GM10248 (cell line): ENCODE measurements at regions of chr3 and their contacts with region 1.

Region 1: DNA sequence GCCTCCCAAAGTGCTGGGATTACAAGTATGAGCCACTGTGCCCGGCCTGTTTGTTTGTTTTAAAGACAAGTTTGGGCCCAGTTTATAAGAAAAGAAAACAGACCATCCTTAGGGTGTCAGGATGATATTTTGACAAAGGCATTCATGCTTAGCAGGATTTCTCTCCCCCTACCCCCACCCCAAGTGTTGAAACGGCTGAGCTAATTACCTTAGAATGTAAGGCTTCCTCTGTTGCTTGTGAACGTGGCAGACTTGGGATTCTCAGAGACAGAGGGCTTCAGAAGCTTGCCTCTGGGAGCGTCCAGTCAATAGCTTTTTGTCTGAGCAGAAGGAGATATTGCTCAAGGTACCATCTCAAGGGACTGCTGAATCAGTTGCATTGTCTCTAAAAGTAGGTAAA is 24.0 kb downstream of the FLNB start:
- DNase-seq: no peak
- CTCF ChIP-seq: no peak

Region 2: GRCh38 chr3:57998366-57999283 is 33.6 kb before region 1 on chr3:
- CTCF ChIA-PET with region 1: no interaction called
- POLR2A ChIA-PET with region 1: no interaction called
- DNase-seq: peak; percentile 60
- CTCF ChIP-seq: no peak

Region 3: DNA sequence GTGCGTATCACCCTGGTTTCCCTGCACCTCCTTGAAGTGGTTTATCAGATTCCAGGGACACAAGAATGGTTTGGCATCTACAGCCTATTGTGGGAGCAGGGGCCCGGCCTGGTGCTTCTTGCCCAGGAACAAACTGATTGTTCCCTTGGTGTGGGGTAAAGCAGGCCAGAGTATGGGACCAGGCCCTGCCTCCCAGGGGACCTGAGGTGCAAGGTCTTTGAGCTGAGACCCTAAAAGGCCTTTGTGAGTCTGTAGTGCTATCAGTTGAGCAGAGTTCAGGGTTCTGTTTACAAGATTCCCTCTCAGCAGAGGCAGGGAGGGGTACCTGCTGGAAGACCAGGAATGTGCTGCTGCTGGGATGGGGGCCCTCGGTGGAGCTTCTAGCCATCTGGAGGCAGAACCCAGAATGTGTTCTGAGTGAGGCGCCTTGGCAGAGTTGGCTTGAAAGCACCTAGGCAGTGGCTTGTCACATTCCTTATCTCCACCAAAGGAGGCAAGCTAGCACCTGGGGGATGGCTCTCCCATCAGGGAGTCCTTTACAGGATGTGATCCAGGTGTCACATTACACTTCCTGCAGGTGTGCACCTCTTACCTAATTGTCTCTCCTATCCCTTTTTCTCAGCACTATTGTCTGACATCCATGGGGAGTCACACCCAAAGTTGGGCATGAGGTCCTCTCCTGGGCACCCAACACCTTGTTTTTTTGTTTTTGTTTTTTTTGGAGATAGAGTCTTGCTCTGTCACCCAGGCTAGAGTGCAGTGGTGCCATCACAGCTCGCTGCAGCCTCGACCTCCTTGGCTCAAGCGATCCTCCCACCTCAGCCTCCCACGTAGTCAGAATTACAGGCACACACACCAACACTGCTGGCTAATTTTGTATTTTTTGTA is 10.9 kb before region 1 on chr3:
- CTCF ChIA-PET with region 1: interaction called, 10 read pairs
- POLR2A ChIA-PET with region 1: no interaction called
- DNase-seq: no peak
- CTCF ChIP-seq: no peak

Region 4: GRCh38 chr3:58129041-58129770 is 97.0 kb after region 1 on chr3:
- CTCF ChIA-PET with region 1: no interaction called
- POLR2A ChIA-PET with region 1: no interaction called
- DNase-seq: no peak
- CTCF ChIP-seq: no peak